ENCODE measurements at regions of chr10 and their contacts with region 1.

Region 1: GRCh38 chr10:52488606-52489485 is 174.8 kb downstream of the DKK1 start:
- DNase-seq: peak; percentile 42

Region 2: GRCh38 chr10:52308251-52309031 is 180.4 kb before region 1 on chr10:
- CTCF ChIA-PET with region 1: interaction called, 53 read pairs
- POLR2A ChIA-PET with region 1: interaction called, 6 read pairs
- DNase-seq: peak; percentile 82

Region 3: DNA sequence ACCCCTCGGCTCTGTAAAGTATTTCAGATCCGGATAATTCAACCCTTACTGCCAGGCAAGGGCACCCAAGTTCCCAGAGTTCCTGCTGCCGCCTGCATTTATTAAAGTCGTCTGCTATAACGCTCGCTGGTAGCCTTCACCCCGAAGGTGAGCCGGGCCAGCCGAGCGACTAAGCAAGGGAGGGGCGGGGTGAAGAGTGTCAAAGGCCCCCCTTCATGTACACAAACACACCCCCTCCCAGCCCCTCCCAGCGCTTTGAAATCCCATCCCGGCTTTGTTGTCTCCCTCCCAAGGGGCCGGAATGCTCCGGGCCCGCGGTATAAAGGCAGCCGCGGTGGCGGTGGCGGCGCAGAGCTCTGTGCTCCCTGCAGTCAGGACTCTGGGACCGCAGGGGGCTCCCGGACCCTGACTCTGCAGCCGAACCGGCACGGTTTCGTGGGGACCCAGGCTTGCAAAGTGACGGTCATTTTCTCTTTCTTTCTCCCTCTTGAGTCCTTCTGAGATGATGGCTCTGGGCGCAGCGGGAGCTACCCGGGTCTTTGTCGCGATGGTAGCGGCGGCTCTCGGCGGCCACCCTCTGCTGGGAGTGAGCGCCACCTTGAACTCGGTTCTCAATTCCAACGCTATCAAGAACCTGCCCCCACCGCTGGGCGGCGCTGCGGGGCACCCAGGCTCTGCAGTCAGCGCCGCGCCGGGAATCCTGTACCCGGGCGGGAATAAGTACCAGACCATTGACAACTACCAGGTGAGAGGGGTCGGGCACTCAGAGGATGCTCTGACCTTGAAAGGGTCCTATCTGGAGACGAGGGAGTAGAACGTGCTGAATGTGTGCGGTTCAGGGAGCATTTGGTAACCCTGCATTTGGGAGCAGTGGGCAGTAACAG is 174.7 kb before region 1 on chr10 and contains the start of gene DKK1:
- CTCF ChIA-PET with region 1: interaction called, 53 read pairs
- POLR2A ChIA-PET with region 1: interaction called, 4 read pairs
- DNase-seq: peak; percentile 90

Region 4: GRCh38 chr10:52443419-52444388 is 45.1 kb before region 1 on chr10:
- CTCF ChIA-PET with region 1: no interaction called
- POLR2A ChIA-PET with region 1: no interaction called
- DNase-seq: no peak

Region 5: GRCh38 chr10:52615756-52616394 is 127.0 kb after region 1 on chr10:
- CTCF ChIA-PET with region 1: no interaction called
- POLR2A ChIA-PET with region 1: no interaction called
- DNase-seq: no peak